WTC11 (cell line): ENCODE measurements at regions of chr16 and their contacts with region 1.

Region 1: DNA sequence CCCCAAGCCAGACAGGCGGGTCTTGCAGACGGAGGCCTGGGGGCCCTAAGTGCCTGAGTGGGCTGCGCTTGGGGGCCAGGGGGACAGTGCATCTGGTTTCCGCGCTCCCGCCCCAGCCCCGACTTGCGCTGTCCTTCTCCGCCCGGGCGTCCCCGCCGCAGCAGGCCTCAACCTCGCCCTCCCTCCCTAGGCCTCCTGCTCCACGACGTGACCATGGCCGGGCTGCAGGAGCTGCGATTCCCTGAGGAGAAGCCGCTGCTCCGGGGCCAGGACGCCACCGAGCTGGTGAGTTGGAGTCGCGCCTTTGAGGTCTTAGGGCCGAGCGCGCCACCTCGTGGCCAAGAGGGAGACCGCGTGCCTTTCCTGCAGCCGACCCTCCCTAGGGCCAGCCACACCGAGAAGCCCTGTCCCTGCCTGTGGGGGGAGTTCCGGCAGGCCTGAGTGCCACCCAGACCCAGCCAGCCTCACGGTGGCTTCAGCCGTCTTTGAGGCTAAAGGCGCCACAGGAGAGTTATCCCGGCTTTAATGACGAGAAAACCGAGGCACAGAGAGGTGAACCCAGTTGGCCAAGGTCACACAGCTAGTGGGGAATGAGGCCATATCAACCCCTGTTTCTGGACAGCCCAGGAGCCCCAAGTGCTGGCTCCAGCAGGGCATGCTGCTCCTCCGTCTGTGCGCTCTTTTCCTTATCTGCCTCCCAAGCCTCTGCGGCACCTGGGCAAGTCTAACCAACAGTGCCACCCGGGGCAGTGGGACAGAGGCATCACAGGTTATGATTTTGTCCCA is 12.2 kb upstream of the NDRG4 start:
- DNase-seq: peak; percentile 94
- ATAC-seq: peak; percentile 94
- H3K4me3 Mint-ChIP-seq: no peak overlapping the region
- H3K27ac Mint-ChIP-seq: no peak overlapping the region
- H3K4me1 Mint-ChIP-seq: peaks cover 5% of the 10 kb centered on the region
- H3K27me3 Mint-ChIP-seq: peaks cover 7% of the 10 kb centered on the region
- CTCF ChIP-seq: peak; percentile 95

Region 2: GRCh38 chr16:58435779-58436178 is 52.0 kb before region 1 on chr16:
- CTCF ChIA-PET with region 1: interaction called, 22 read pairs
- POLR2A ChIA-PET with region 1: no interaction called
- DNase-seq: no peak
- ATAC-seq: peak; percentile 30; the same call in 1 of the 2 replicates
- H3K4me3 Mint-ChIP-seq: no peak overlapping the region
- H3K27ac Mint-ChIP-seq: no peak overlapping the region
- H3K4me1 Mint-ChIP-seq: no peaks in the 10 kb centered on the region
- H3K27me3 Mint-ChIP-seq: peaks cover 3% of the 10 kb centered on the region; the same call in 1 of the 2 replicates
- CTCF ChIP-seq: no peak

Region 3: DNA sequence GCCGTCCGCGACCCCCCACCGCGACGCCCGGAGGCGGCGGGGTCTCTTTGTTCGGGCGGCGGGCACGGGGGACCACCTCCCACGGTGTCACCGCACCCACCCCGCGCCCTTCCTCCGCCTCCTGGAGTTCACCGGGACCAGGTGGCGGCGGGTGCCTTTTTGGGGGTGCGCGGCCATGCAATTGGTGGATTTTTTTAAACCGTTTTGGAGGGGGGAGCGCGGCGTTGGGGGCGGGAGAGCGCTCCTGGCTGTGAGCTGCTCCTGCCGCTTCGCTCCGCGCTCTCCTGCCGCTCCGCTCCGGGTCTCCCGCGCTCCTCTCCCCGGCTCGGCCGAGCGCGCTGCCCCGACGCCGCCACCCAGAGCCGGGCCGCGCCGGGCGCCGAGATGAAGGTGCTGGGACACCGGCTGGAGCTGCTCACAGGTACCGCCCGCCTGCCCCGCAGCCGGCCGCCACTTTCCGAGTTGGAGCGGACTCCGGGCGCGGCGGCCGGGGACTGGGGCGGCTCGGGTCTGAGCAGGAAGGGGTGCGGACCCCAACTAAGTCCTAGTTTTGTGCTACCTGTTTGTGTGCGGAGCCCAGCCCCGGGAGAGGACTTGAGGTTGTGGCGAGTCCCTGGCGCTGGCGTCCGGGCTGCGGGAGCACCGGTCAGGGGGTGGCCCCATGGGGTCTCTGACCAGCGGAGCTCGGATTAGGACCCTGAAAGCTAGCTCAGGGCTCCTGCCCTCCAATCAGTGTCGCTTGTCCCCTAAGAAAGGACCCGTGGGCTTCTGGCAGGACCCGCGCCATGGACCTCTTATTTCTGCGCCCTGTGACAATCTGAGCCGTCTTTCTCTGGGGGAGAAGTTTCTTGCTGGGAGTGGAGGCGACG is 23.5 kb before region 1 on chr16:
- CTCF ChIA-PET with region 1: interaction called, 15 read pairs
- POLR2A ChIA-PET with region 1: no interaction called
- DNase-seq: peak; percentile 42
- ATAC-seq: peak; percentile 32
- H3K4me3 Mint-ChIP-seq: peak overlapping the region; percentile 86
- H3K27ac Mint-ChIP-seq: no peak overlapping the region
- H3K4me1 Mint-ChIP-seq: peaks cover 11% of the 10 kb centered on the region
- H3K27me3 Mint-ChIP-seq: peaks cover 91% of the 10 kb centered on the region
- CTCF ChIP-seq: no peak

Region 4: DNA sequence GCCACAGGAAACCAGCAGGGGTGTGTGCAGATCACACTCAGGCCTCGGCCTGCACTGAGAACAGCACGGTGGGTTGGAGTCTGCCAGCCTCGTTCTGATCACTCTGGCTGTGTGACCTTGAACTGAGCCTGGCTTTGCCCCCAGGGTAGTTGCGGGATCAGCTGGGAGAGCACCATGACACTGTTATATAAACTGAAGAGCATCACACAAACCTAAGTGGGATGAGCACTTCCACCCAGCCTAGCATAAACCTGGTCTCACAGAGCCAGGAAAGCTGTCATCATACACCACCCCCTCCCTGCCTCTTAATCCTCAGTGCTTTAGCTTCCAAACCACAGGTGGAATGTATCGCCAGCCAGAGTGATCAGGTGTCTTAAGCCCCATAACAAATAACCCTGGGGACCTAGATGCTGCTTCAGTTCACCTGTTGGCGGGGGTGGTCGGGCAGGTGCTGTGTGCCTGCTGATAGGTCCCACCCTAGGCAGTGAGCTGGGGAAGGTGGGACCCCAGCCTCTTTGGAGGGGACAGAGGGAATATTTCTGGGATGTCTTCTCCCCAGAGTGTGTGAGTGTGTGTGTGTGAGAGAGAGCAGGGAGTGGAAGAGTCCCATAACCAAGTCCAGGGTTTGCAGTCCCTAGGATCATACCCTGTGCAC is 16.3 kb before region 1 on chr16:
- CTCF ChIA-PET with region 1: interaction called, 15 read pairs
- POLR2A ChIA-PET with region 1: no interaction called
- DNase-seq: no peak
- ATAC-seq: peak; percentile 72
- H3K4me3 Mint-ChIP-seq: no peak overlapping the region
- H3K27ac Mint-ChIP-seq: no peak overlapping the region
- H3K4me1 Mint-ChIP-seq: peaks cover 18% of the 10 kb centered on the region
- H3K27me3 Mint-ChIP-seq: peaks cover 33% of the 10 kb centered on the region
- CTCF ChIP-seq: no peak